IMR-90 (cell line): ENCODE measurements at regions of chr1 and their contacts with region 1.

Region 1: DNA sequence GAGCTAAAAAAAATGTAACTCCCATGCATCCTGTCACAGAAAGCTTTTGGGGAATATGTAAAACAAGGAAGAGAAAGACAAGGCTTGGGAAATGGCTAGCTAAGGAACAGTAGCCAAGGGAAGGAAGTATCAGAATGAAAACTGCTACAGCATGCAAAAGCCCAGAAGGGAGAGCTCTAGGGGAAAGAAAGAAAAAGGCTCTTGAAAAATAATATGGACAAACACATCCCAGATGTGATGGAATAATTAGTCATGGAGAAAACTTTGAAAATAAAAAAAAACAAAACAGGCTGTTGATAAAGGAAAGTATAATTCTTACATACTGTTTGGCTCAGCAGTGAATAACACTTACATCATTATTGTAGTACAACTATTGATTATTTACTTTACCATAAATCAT is 47.9 kb upstream of the VCAM1 start:
- DNase-seq: peak; percentile 60
- ATAC-seq: peak; percentile 70
- H3K4me3 ChIP-seq: no peak overlapping the region
- H3K27ac ChIP-seq: no peak overlapping the region
- H3K4me1 ChIP-seq: peaks cover 3% of the 10 kb centered on the region
- H3K27me3 ChIP-seq: no peaks in the 10 kb centered on the region
- CTCF ChIP-seq: no peak; the same call in 1 of the 2 replicates
- POLR2A ChIP-seq: no peak
- RAD21 ChIP-seq: peak; percentile 29; the same call in 1 of the 2 replicates

Region 2: GRCh38 chr1:100622037-100622436 is 49.6 kb before region 1 on chr1:
- CTCF ChIA-PET with region 1: interaction called, 3 read pairs
- POLR2A ChIA-PET with region 1: no interaction called
- dilution Hi-C with region 1: no loop called
- in situ Hi-C with region 1: no loop called
- intact Hi-C with region 1: loop called (anchors 2 kb)
- DNase-seq: peak; percentile 99
- ATAC-seq: peak; percentile 73
- H3K4me3 ChIP-seq: no peak overlapping the region
- H3K27ac ChIP-seq: peak overlapping the region; percentile 93; the same call in 1 of the 2 replicates
- H3K4me1 ChIP-seq: peaks cover 21% of the 10 kb centered on the region
- H3K27me3 ChIP-seq: no peaks in the 10 kb centered on the region
- CTCF ChIP-seq: no peak
- POLR2A ChIP-seq: no peak
- RAD21 ChIP-seq: peak; percentile 20

Region 3: DNA sequence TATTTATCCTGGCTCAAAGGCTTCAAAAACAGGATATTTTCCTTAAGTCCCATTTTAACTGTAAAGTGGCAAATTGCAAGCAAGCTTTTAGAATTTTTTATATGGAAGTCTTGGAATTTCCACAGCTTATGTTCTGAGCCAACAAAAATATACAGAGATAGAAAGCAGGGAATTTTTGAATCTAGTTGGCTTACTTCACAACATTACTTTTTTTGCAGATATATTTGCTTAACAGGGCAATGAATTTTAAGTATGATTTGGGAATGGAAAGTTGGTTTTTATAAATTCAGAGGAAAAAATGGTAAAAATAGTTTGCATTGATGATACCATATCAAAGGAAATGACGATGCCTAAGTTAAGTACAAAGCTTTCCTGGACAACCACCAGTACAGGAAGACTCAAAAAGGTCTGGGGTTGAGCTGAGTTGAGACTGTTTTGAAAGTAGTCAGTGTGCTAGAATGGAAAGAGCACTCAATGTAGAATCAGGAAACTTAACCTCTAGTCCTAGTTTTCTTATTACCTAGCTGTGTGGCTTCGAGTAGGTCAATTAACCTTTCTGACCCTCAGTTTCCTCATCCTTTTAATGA is 37.0 kb after region 1 on chr1:
- CTCF ChIA-PET with region 1: no interaction called
- POLR2A ChIA-PET with region 1: no interaction called
- dilution Hi-C with region 1: no loop called
- in situ Hi-C with region 1: no loop called
- intact Hi-C with region 1: loop called (anchors 5 kb)
- DNase-seq: peak; percentile 77
- ATAC-seq: peak; percentile 31
- H3K4me3 ChIP-seq: no peak overlapping the region
- H3K27ac ChIP-seq: peak overlapping the region; percentile 77; the same call in 1 of the 2 replicates
- H3K4me1 ChIP-seq: peaks cover 25% of the 10 kb centered on the region
- H3K27me3 ChIP-seq: no peaks in the 10 kb centered on the region
- CTCF ChIP-seq: no peak
- POLR2A ChIP-seq: no peak
- RAD21 ChIP-seq: no peak

Region 4: GRCh38 chr1:100760511-100760910 is 88.9 kb after region 1 on chr1:
- CTCF ChIA-PET with region 1: no interaction called
- POLR2A ChIA-PET with region 1: no interaction called
- dilution Hi-C with region 1: no loop called
- in situ Hi-C with region 1: no loop called
- intact Hi-C with region 1: no loop called
- DNase-seq: no peak
- ATAC-seq: no peak
- H3K4me3 ChIP-seq: no peak overlapping the region
- H3K27ac ChIP-seq: no peak overlapping the region
- H3K4me1 ChIP-seq: no peaks in the 10 kb centered on the region
- H3K27me3 ChIP-seq: no peaks in the 10 kb centered on the region
- CTCF ChIP-seq: no peak
- POLR2A ChIP-seq: no peak
- RAD21 ChIP-seq: no peak